PC-3 (cell line): ENCODE measurements at regions of chr18 and their contacts with region 1.

Region 1: DNA sequence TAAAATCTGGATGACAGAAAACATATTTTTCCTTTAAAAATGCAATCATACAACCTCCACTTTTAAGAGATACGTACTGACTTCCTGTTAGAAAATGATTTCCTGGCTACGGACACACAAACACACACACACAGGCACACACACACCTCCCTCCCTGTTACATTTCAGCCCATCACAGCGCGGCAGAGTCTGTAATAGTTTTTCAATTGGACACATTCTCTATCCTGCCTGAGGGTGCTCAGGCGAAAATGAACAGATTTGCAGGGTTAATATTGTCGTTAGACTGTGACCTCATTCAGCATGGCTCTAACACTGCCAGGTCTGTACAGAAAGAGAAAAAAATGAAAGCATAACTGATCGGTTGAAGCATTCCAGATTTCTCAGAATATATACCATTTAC is 45.0 kb downstream of the KCTD1 start:
- DNase-seq: no peak
- ATAC-seq: no peak
- H3K4me3 ChIP-seq: no peak overlapping the region
- H3K27ac ChIP-seq: no peak overlapping the region
- H3K4me1 ChIP-seq: peaks cover 6% of the 10 kb centered on the region
- H3K27me3 ChIP-seq: no peaks in the 10 kb centered on the region
- CTCF ChIP-seq: no peak

Region 2: GRCh38 chr18:25976554-25976953 is 526.8 kb before region 1 on chr18:
- CTCF ChIA-PET with region 1: interaction called, 13 read pairs
- POLR2A ChIA-PET with region 1: no interaction called
- intact Hi-C with region 1: no loop called
- DNase-seq: no peak
- ATAC-seq: no peak
- H3K4me3 ChIP-seq: no peak overlapping the region
- H3K27ac ChIP-seq: no peak overlapping the region
- H3K4me1 ChIP-seq: no peaks in the 10 kb centered on the region
- H3K27me3 ChIP-seq: no peaks in the 10 kb centered on the region
- CTCF ChIP-seq: no peak

Region 3: GRCh38 chr18:26356045-26356785 is 147.2 kb before region 1 on chr18:
- CTCF ChIA-PET with region 1: no interaction called
- POLR2A ChIA-PET with region 1: no interaction called
- intact Hi-C with region 1: no loop called
- DNase-seq: no peak
- ATAC-seq: no peak
- H3K4me3 ChIP-seq: no peak overlapping the region
- H3K27ac ChIP-seq: no peak overlapping the region
- H3K4me1 ChIP-seq: no peaks in the 10 kb centered on the region
- H3K27me3 ChIP-seq: no peaks in the 10 kb centered on the region
- CTCF ChIP-seq: no peak

Region 4: GRCh38 chr18:26637324-26637723 is 133.9 kb after region 1 on chr18:
- CTCF ChIA-PET with region 1: no interaction called
- POLR2A ChIA-PET with region 1: no interaction called
- intact Hi-C with region 1: no loop called
- DNase-seq: no peak
- ATAC-seq: no peak
- H3K4me3 ChIP-seq: no peak overlapping the region
- H3K27ac ChIP-seq: no peak overlapping the region
- H3K4me1 ChIP-seq: no peaks in the 10 kb centered on the region
- H3K27me3 ChIP-seq: peaks cover 9% of the 10 kb centered on the region
- CTCF ChIP-seq: no peak

Region 5: DNA sequence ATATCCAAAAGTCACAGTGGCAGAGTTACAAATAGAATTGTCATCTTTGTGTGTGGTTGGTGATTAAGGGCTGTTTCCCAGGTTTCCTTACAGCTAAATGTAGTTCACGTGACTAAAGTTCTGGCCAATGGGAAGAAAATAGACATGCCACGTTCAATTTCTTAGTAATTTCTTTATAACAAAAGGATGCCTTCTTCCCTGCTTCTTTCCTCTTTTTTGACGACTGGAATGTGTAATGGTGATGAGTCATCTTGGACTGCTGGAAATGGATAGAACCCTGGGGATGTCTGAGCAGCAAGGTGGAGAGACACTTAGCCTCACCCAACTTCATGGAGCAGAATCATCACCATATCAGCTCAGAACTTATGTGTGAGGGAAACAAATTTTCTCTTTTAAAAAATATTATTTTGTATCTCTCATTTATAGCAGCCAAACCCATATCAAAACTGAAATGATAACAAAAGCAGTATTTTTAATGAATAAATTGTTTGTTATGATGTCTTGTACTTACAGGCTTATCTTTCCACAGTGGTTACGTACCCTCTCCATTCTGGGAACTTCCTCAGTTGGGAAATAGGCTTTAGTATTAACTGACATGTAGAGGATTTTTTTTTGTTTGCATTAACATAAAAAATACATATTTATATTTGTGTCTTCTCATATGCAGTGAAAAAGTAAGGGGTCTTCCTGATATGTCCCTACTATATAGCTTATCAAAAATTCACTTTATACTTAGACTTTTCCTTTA is 1764.7 kb after region 1 on chr18:
- CTCF ChIA-PET with region 1: no interaction called
- POLR2A ChIA-PET with region 1: no interaction called
- intact Hi-C with region 1: no loop called
- DNase-seq: peak; percentile 66
- ATAC-seq: peak; percentile 84
- H3K4me3 ChIP-seq: no peak overlapping the region
- H3K27ac ChIP-seq: no peak overlapping the region
- H3K4me1 ChIP-seq: 0 out of 2 replicates have a peak, but pooled peaks cover 7% of the 10 kb centered on the region
- H3K27me3 ChIP-seq: no peaks in the 10 kb centered on the region
- CTCF ChIP-seq: no peak